ENCODE measurements at regions of chr3 and their contacts with region 1.

Region 1: DNA sequence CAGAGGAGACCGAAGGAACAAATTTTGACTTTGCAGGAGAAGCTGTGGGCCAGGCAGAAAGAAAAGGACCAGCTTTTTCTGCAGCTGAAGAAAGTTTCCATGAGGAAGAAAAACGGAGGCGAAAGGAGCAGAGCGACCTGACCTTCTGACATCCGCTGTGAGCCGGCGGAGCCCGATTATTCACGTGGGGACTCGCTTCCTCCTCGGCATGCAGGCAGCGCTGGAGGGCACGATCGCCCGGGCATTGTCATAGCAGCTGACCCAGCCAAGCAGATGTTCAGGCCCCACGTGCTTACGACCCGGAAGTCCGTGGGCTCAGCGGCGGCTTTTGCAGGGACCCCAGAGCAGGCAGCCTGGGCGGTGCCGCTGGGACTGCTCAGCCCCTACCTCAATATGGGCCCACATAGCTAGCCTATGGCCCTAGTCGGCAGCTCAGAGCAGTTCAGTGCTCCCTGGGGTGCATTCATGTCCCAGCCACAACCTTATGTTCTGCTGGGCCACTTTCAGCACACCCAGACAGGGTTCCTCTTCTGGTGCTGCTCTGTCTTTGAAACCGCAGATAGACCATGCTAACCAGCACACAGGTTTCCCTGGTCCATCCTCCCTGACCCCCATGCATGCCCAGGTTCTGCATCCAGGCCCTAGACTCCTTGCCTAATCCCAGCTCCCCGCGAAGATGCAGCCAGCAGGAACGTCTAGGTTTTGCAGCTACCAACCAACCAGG is 10.5 kb upstream of the EIF4A2 start:
- DNase-seq: peak; percentile 5 to 72 (median 39)
- ATAC-seq: peak; percentile 86 to 95 (median 90)
- H3K4me3 ChIP-seq: peak overlapping the region; percentile 65 to 69
- H3K4me3 Mint-ChIP-seq: peak overlapping the region; percentile 89 to 92 (median 90)
- H3K27ac ChIP-seq: peak overlapping the region; percentile 70
- H3K27ac Mint-ChIP-seq: peak overlapping the region; percentile 94
- H3K4me1 ChIP-seq: peaks cover 2 to 14% of the 10 kb centered on the region in 2 experiments
- H3K4me1 Mint-ChIP-seq: peaks cover 17 to 18% (median 17%) of the 10 kb centered on the region in 3 donors
- H3K27me3 ChIP-seq: no peaks in the 10 kb centered on the region
- H3K27me3 Mint-ChIP-seq: no peaks in the 10 kb centered on the region

Region 2: GRCh38 chr3:186790261-186790981 is 17.6 kb after region 1 on chr3:
- CTCF ChIA-PET with region 1: no interaction called
- POLR2A ChIA-PET with region 1: interaction called, 6 to 11 read pairs
- DNase-seq: peak in 1 of 35 experiments; percentile 25
- ATAC-seq: peak in 3 of 4 experiments; percentile 4 to 33 (median 32)
- H3K4me3 ChIP-seq: no peak overlapping the region
- H3K4me3 Mint-ChIP-seq: no peak overlapping the region
- H3K27ac ChIP-seq: peak overlapping the region; percentile 27
- H3K27ac Mint-ChIP-seq: peak overlapping the region; percentile 33 to 68
- H3K4me1 ChIP-seq: peaks cover 20 to 26% of the 10 kb centered on the region in 2 experiments
- H3K4me1 Mint-ChIP-seq: peaks cover 43 to 46% (median 45%) of the 10 kb centered on the region in 3 donors
- H3K27me3 ChIP-seq: no peaks in the 10 kb centered on the region
- H3K27me3 Mint-ChIP-seq: no peaks in the 10 kb centered on the region

Region 3: GRCh38 chr3:186849374-186849975 is 76.6 kb after region 1 on chr3:
- CTCF ChIA-PET with region 1: no interaction called
- POLR2A ChIA-PET with region 1: no interaction called
- DNase-seq: peak in 4 of 35 experiments; percentile 11 to 76 (median 20)
- ATAC-seq: peak; percentile 86 to 98 (median 95)
- H3K4me3 ChIP-seq: no peak overlapping the region
- H3K4me3 Mint-ChIP-seq: no peak overlapping the region
- H3K27ac ChIP-seq: no peak overlapping the region
- H3K27ac Mint-ChIP-seq: peak overlapping the region; percentile 60 to 72
- H3K4me1 ChIP-seq: peaks cover 0 to 4% of the 10 kb centered on the region in 2 experiments
- H3K4me1 Mint-ChIP-seq: peaks cover 11 to 22% (median 18%) of the 10 kb centered on the region in 3 donors
- H3K27me3 ChIP-seq: peaks cover 0 to 8% of the 10 kb centered on the region in 2 experiments
- H3K27me3 Mint-ChIP-seq: peaks cover 3 to 8% of the 10 kb centered on the region in 2 donors

Region 4: GRCh38 chr3:187352581-187353575 is 580.0 kb after region 1 on chr3:
- CTCF ChIA-PET with region 1: no interaction called
- POLR2A ChIA-PET with region 1: interaction called in 1 of 2 experiments, 10 read pairs
- DNase-seq: no peak
- ATAC-seq: no peak
- H3K4me3 ChIP-seq: no peak overlapping the region
- H3K4me3 Mint-ChIP-seq: no peak overlapping the region
- H3K27ac ChIP-seq: no peak overlapping the region
- H3K27ac Mint-ChIP-seq: no peak overlapping the region
- H3K4me1 ChIP-seq: no peaks in the 10 kb centered on the region
- H3K4me1 Mint-ChIP-seq: no peaks in the 10 kb centered on the region
- H3K27me3 ChIP-seq: peaks cover 0 to 2% of the 10 kb centered on the region in 2 experiments
- H3K27me3 Mint-ChIP-seq: peaks cover 0 to 4% of the 10 kb centered on the region in 2 donors

Region 5: GRCh38 chr3:188010478-188010877 is 1237.6 kb after region 1 on chr3:
- CTCF ChIA-PET with region 1: no interaction called
- POLR2A ChIA-PET with region 1: no interaction called
- DNase-seq: no peak
- ATAC-seq: no peak
- H3K4me3 ChIP-seq: no peak overlapping the region
- H3K4me3 Mint-ChIP-seq: no peak overlapping the region
- H3K27ac ChIP-seq: no peak overlapping the region
- H3K27ac Mint-ChIP-seq: no peak overlapping the region
- H3K4me1 ChIP-seq: no peaks in the 10 kb centered on the region
- H3K4me1 Mint-ChIP-seq: peaks cover 0 to 9% (median 7%) of the 10 kb centered on the region in 3 donors
- H3K27me3 ChIP-seq: no peaks in the 10 kb centered on the region
- H3K27me3 Mint-ChIP-seq: no peaks in the 10 kb centered on the region